Activated B cell treated with CpG ODN at 0.5 μM for 24 hours (primary cell): ENCODE measurements at regions of chr3 and their contacts with region 1.

Region 1: DNA sequence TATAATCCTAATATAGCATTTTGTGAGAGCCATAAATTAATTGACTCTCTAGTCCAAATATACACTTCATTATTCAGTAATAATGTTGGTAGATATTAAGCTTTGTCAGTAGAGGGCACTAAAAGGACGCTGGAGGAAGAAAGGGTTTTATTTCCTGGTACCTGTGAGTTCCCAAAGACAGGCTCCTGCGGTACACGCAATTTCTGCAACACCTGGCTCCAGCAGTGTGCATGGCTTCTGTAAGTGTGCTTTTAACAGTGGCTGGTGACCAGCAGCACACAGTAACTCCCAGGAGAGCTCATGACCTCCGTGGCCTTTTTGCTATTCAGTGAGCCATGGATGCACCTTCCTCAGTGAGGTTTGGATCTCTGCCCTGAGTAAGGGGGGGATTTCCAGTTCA is 338.3 kb upstream of the ZNF385D start:
- DNase-seq: no peak
- ATAC-seq: no peak
- H3K4me3 Mint-ChIP-seq: no peak overlapping the region
- H3K27ac Mint-ChIP-seq: no peak overlapping the region
- H3K4me1 Mint-ChIP-seq: no peaks in the 10 kb centered on the region
- H3K27me3 Mint-ChIP-seq: no peaks in the 10 kb centered on the region
- CTCF ChIP-seq: no peak

Region 2: DNA sequence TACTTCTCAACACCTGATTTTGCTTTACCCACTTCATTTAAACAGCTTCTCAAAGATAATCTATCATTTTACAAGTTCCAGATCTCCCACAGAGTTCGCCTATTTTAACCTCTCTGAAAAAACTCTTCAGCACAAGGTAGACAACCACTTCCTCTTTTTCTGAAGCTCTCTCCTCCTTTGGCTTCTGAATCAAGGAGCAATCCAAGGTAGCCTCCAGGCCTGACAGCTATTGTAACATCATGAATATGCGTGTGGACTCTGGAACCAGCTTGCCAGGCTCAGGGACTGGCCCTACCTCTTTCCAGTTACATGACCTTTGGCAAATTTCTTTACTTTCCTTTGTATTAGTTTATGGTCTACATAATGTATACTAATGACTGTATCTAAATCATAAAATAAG is 67.6 kb after region 1 on chr3:
- CTCF ChIA-PET with region 1: no interaction called
- POLR2A ChIA-PET with region 1: no interaction called
- intact Hi-C with region 1: no loop called
- DNase-seq: no peak
- ATAC-seq: no peak
- H3K4me3 Mint-ChIP-seq: no peak overlapping the region
- H3K27ac Mint-ChIP-seq: no peak overlapping the region
- H3K4me1 Mint-ChIP-seq: no peaks in the 10 kb centered on the region
- H3K27me3 Mint-ChIP-seq: no peaks in the 10 kb centered on the region
- CTCF ChIP-seq: no peak

Region 3: GRCh38 chr3:22244761-22245521 is 155.7 kb after region 1 on chr3:
- CTCF ChIA-PET with region 1: no interaction called
- POLR2A ChIA-PET with region 1: no interaction called
- intact Hi-C with region 1: no loop called
- DNase-seq: no peak
- ATAC-seq: no peak
- H3K4me3 Mint-ChIP-seq: no peak overlapping the region
- H3K27ac Mint-ChIP-seq: no peak overlapping the region
- H3K4me1 Mint-ChIP-seq: no peaks in the 10 kb centered on the region
- H3K27me3 Mint-ChIP-seq: no peaks in the 10 kb centered on the region
- CTCF ChIP-seq: no peak

Region 4: DNA sequence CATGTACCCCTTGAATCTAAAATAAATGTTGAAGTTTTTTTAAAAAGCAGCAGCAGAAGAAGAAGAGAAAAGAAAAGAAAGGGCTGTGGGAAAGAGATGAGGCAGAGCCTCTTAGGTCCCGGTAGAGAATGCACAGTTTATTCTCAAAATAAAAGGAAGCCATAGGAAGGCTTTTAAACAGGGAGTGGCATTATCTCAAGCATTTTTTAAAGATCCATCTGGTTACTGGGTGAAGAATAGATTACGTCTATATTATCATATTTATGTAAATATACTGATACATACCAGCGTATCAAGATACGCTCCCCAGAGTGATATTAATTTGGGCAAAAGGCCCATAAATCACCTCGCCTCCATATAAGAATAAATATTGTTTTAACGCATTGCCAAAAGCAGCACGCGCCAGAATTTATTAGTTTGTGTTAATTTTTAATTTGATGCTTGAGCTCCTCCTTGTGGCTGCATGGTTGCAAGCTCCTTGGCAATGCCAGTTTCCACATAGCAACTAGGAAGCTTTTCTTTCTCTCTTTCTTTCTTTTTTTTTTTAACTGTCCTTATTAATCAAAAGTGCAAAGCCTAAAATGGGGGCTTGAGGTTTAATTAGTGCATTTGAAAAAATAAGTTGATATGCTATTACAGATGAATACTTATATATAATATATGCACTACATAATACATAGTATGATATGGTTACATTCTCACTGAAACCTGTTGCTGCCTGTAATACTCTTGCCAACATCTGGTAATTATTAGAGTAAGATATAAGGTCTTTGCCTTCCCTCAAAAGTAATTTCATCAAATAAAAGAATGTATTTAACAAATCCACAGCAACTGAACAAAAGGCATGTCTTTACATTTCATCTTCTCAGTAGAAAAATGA is 871.1 kb after region 1 on chr3:
- CTCF ChIA-PET with region 1: no interaction called
- POLR2A ChIA-PET with region 1: no interaction called
- intact Hi-C with region 1: loop called (anchors 2 kb)
- DNase-seq: no peak
- ATAC-seq: no peak
- H3K4me3 Mint-ChIP-seq: no peak overlapping the region
- H3K27ac Mint-ChIP-seq: no peak overlapping the region
- H3K4me1 Mint-ChIP-seq: peaks cover 4% of the 10 kb centered on the region
- H3K27me3 Mint-ChIP-seq: no peaks in the 10 kb centered on the region
- CTCF ChIP-seq: no peak